ENCODE measurements at regions of chr9 and their contacts with region 1.

Region 1: GRCh38 chr9:37913480-37914153 is 9.7 kb upstream of the SLC25A51 start:
- DNase-seq: peak in 4 of 5 donors; percentile 66 to 81 (median 78)
- ATAC-seq: peak; percentile 70 to 85 (median 82)
- H3K4me3 ChIP-seq: no peak overlapping the region
- H3K27ac ChIP-seq: peak overlapping the region in 1 of 12 donors; percentile 0
- H3K4me1 ChIP-seq: peaks cover 0 to 42% (median 28%) of the 10 kb centered on the region in 12 donors
- H3K27me3 ChIP-seq: no peaks in the 10 kb centered on the region
- CTCF ChIP-seq: peak in 11 of 12 donors; percentile 92 to 99 (median 98)
- POLR2A ChIP-seq: no peak

Region 2: GRCh38 chr9:37953775-37954437 is 40.3 kb after region 1 on chr9:
- intact Hi-C with region 1: loop called in 1 of 10 experiments (anchors 5 kb)
- DNase-seq: peak in 2 of 5 donors; percentile 28 to 62
- ATAC-seq: peak; percentile 42 to 75 (median 58)
- H3K4me3 ChIP-seq: no peak overlapping the region
- H3K27ac ChIP-seq: peak overlapping the region in 7 of 12 donors; percentile 17 to 73 (median 46)
- H3K4me1 ChIP-seq: peaks cover 0 to 56% (median 20%) of the 10 kb centered on the region in 12 donors
- H3K27me3 ChIP-seq: no peaks in the 10 kb centered on the region
- CTCF ChIP-seq: no peak
- POLR2A ChIP-seq: no peak

Region 3: DNA sequence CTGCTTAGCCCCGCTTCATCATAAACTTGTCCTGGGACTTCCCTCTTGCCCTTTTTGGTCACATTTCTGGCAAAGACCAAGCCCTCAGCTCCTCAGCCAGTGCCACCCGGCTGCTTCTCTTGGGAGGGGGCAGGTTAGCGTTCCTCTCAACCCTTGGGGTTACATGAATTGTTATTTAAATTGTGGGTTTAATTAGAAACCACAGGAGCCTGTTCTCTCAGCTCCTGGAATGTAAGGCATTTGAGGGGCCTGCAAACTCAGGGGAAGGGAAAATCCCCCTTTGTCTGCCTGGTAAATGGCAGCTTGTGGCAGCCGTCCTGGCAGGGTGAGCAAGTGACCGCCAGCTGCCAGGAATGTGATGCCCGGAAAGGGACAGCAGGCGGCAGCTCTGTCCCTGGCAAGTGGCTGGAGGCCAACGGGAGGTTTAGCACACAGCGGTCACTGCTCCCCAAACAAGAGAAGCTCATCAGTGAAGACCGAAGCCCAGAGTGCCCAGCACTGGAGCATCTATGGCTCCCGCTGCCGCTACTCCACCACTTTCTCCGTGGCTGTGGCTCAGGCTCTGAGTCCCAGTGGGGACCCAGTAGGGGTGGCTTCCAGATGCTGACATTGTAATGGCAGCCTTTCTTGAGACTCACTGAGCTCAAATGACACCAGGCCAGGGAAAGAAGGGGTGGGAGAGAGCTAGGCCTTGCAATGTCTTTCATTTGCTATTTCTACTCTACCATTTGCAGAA is 103.7 kb after region 1 on chr9:
- intact Hi-C with region 1: loop called in 1 of 10 experiments (anchors 10 kb)
- DNase-seq: peak; percentile 74 to 88 (median 79)
- ATAC-seq: peak; percentile 71 to 90 (median 84)
- H3K4me3 ChIP-seq: no peak overlapping the region
- H3K27ac ChIP-seq: peak overlapping the region in 10 of 12 donors; percentile 18 to 87 (median 72)
- H3K4me1 ChIP-seq: peaks cover 11 to 65% (median 48%) of the 10 kb centered on the region in 12 donors
- H3K27me3 ChIP-seq: no peaks in the 10 kb centered on the region
- CTCF ChIP-seq: peak in 11 of 12 donors; percentile 24 to 63 (median 49)
- POLR2A ChIP-seq: no peak

Region 4: GRCh38 chr9:38088006-38088925 is 174.6 kb after region 1 on chr9:
- intact Hi-C with region 1: loop called in 6 of 10 experiments (anchors 2 to 5 kb)
- DNase-seq: peak; percentile 75 to 87 (median 75)
- ATAC-seq: peak; percentile 71 to 85 (median 79)
- H3K4me3 ChIP-seq: no peak overlapping the region
- H3K27ac ChIP-seq: no peak overlapping the region
- H3K4me1 ChIP-seq: peaks cover 0 to 23% (median 6%) of the 10 kb centered on the region in 12 donors
- H3K27me3 ChIP-seq: no peaks in the 10 kb centered on the region
- CTCF ChIP-seq: peak; percentile 94 to 100 (median 97)
- POLR2A ChIP-seq: no peak

Region 5: GRCh38 chr9:38392235-38393127 is 478.9 kb after region 1 on chr9 and contains the start of gene ALDH1B1:
- intact Hi-C with region 1: loop called in 5 of 10 experiments (anchors 10 kb)
- DNase-seq: peak; percentile 85 to 93 (median 89)
- ATAC-seq: peak; percentile 96 to 99 (median 99)
- H3K4me3 ChIP-seq: peak within 1 kb of the TSS; percentile 37 to 87 (median 75)
- H3K27ac ChIP-seq: peak within 1 kb of the TSS in 7 of 12 donors; percentile 19 to 84 (median 54)
- H3K4me1 ChIP-seq: peaks cover 0 to 31% (median 12%) of the 10 kb centered on the region in 12 donors
- H3K27me3 ChIP-seq: no peaks in the 10 kb centered on the region
- CTCF ChIP-seq: peak in 3 of 12 donors; percentile 10 to 32 (median 11)
- POLR2A ChIP-seq: peak in 1 of 2 donors; percentile 33
- total RNA-seq, gene ALDH1B1: 15.3 to 55.6 (median 20.7) TPM

Measured in heart left ventricle (tissue), 16 donors.